ENCODE measurements at regions of chr7 and their contacts with region 1.

Region 1: GRCh38 chr7:103296901-103297836 is at the start of gene PMPCB:
- DNase-seq: peak; percentile 99
- H3K4me3 Mint-ChIP-seq: peak within 1 kb of the TSS; percentile 75
- H3K27ac Mint-ChIP-seq: peak within 1 kb of the TSS; percentile 65
- H3K4me1 Mint-ChIP-seq: peaks cover 33% of the 10 kb centered on the region
- H3K27me3 Mint-ChIP-seq: no peaks in the 10 kb centered on the region
- total RNA-seq, gene PMPCB: 83.9 to 90.1 TPM

Region 2: DNA sequence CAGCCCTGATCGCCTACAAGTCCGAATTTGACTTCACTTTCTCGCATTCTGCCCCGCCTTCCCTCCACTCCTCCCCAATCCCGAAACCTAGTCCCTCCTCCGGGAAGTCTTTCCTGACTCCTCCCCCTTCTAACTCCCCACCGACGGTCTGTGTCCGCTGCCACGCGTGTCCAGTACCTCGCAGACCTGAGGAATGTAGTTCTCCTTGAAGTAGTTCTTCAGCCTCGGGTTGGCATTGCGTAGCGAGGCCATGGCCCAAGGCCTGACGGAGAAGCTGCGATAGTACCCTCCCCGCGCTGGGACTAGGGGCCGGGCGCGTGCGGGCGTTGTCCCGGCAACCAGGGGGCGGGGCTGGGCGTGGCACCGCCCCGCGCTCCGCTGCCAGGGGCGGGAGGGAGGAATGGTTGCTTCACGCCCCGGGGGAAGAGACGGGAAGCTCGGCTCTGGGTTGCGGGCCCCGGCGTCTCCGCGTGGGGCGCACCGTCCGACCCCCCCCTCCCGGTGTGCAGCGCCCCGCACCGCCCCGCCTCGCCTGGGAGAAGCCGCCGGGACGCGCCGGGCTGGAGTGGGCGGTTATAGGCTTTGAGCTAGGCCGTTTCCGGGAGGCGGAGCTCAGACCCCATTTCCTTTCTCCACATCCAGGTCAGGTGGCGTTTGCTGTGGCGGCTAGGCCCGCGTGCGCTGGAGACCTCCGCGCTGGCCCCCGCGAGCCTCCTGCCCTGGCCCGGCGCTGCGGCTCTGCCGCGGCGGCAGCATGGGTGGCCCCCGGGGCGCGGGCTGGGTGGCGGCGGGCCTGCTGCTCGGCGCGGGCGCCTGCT is 222.4 kb before region 1 on chr7 and contains the starts of genes ARMC10 and FBXL13:
- CTCF ChIA-PET with region 1: no interaction called
- intact Hi-C with region 1: loop called (anchors 5 kb)
- DNase-seq: peak; percentile 92
- H3K4me3 Mint-ChIP-seq: peak within 1 kb of the TSS; percentile 91
- H3K27ac Mint-ChIP-seq: peak within 1 kb of the TSS; percentile 90
- H3K4me1 Mint-ChIP-seq: peaks cover 40% of the 10 kb centered on the region
- H3K27me3 Mint-ChIP-seq: no peaks in the 10 kb centered on the region
- total RNA-seq, gene ARMC10: 46.6 to 50.5 TPM
- total RNA-seq, gene FBXL13: 0.54 to 0.74 TPM

Region 3: GRCh38 chr7:103148994-103149807 is 148.0 kb before region 1 on chr7 and contains the start of gene NAPEPLD:
- CTCF ChIA-PET with region 1: no interaction called
- intact Hi-C with region 1: loop called (anchors 1 kb)
- DNase-seq: peak; percentile 68
- H3K4me3 Mint-ChIP-seq: peak within 1 kb of the TSS; percentile 96
- H3K27ac Mint-ChIP-seq: peak within 1 kb of the TSS; percentile 97
- H3K4me1 Mint-ChIP-seq: peaks cover 32% of the 10 kb centered on the region
- H3K27me3 Mint-ChIP-seq: no peaks in the 10 kb centered on the region
- total RNA-seq, gene NAPEPLD: 6.3 to 6.8 TPM

Region 4: DNA sequence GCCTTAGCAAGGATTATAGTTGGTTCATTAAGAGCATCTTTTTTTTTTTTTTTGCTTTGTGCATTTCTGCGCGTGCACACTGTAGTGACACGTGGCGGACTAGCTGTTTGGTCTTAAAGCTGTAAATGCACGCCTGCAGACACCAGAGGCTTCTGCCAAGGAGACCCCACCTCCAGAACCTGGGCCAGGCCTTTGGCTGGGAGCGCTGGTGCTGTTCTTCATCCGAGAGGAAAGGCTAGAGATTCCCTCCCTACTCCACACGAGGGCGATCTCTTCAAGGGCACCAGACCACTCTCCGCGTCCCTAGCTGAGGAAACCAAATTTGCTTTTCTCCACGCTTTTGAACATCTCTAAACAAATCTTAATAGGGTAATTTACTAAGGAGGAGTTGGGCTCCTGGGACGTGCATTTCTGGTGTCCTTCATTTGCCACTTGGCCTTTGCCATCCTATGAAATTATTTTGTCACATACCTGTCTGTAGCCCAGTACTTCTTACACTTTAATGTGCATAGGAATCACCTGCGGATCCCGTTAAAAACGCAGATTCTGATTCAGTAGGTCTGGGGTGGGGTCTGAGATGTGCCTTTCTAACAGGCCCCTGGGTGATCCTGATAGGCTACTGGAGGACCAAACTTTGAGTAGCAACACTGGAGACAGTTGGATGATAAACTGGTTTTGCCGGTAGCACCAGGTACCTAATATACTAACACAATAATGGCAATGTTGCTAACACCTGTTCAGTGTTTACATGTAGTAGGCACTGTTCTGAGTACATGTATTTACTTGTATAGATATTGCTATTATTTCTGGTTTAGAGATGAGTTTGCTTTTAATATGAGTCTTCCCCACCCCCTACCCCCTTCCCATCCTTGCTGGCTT is 150.1 kb after region 1 on chr7:
- CTCF ChIA-PET with region 1: no interaction called
- intact Hi-C with region 1: loop called (anchors 1 kb)
- DNase-seq: peak; percentile 69
- H3K4me3 Mint-ChIP-seq: no peak overlapping the region
- H3K27ac Mint-ChIP-seq: no peak overlapping the region
- H3K4me1 Mint-ChIP-seq: peaks cover 17% of the 10 kb centered on the region
- H3K27me3 Mint-ChIP-seq: peaks cover 74% of the 10 kb centered on the region

Region 5: DNA sequence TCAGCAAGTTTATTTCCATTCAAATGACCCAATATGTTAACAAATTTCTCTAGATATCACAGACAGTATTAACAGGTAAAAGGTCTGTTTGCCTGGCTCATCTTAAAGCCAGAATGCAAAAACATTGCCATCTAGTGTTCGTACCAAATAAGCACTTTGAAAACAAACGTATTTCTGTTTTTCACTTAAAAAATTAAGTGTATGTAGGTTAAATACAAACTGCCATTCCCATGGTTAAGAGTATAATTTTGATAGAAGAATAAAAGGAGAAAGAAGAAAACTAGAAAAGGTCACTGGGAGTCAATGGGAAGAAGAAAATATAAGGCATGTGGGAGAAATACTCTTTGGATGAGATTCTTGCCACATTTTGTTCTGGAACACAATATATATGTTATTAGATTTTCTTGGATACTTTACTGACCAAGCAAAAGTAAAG is 859.7 kb after region 1 on chr7:
- CTCF ChIA-PET with region 1: no interaction called
- intact Hi-C with region 1: loop called (anchors 5 kb)
- DNase-seq: no peak
- H3K4me3 Mint-ChIP-seq: no peak overlapping the region
- H3K27ac Mint-ChIP-seq: no peak overlapping the region
- H3K4me1 Mint-ChIP-seq: no peaks in the 10 kb centered on the region
- H3K27me3 Mint-ChIP-seq: no peaks in the 10 kb centered on the region

Region 6: DNA sequence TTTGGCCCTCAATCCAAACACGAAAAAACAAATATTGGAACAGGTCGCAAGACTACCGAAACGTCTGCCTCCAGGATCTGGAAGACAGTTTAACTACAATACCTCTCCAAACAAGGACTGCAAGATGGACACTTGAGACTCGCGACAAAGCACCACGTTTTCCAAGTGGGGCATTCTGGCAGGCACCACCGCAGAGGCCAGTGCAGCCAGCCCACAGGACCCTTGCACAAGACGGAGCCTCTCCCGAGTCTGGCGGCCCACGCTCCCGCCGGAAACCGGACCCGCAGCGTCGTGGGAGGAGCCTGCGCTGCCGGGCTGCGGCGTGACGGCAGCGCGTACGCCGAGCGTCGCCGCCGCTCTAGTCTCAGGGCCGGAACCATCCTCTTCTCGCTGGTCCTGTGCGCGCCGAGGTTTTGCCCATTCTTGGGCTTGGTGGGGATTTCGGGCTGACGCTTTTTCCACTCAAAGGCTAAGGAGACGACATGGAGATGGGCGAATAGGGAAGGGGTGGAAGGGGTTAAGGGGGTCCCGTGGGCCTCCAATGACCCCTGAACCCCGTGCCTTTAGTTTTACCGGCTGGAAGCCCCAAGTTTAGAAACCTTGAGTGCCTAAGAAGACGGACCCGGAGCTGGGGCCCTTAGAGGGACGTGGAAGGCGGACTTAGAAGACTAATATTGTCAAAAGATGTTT is 910.7 kb after region 1 on chr7 and contains the start of gene ORC5:
- CTCF ChIA-PET with region 1: no interaction called
- intact Hi-C with region 1: loop called (anchors 5 kb)
- DNase-seq: peak; percentile 80
- H3K4me3 Mint-ChIP-seq: peak within 1 kb of the TSS; percentile 93
- H3K27ac Mint-ChIP-seq: peak within 1 kb of the TSS; percentile 91
- H3K4me1 Mint-ChIP-seq: peaks cover 28% of the 10 kb centered on the region
- H3K27me3 Mint-ChIP-seq: peaks cover 8% of the 10 kb centered on the region
- total RNA-seq, gene ORC5: 19.9 to 21.2 TPM

Measured in activated naive CD4-positive, alpha-beta T cell treated with anti-CD3 and anti-CD28 coated beads for 36 hours (primary cell).